ENCODE measurements at regions of chr3 and their contacts with region 1.

Region 1: DNA sequence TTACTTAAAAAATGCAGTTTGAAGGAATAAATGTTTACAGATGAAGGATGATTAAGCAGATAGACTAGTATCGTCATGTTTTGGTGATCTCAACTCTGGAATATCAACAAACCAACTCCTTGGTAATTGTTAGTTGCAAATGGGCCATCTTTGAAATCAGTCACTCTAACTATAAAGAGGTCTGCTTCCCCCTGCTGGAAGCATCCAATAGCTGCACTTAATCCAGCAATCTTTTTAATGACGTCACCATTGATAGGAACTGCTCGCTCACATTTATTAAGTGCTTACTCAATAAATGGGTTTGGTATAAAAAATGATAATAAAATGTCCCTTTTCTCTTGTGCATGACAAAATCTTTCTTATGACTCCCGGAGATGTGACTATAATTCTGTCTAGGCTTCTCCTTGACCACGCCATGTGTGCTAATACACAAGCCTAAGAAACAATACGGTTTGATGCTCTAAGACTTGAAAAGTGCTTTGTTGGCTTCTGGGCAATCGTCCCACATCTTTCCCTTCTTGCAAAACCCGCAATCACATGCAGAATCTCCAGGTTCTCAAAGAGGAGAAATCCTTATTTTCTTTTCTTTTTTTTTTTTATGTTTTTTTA is 227.6 kb upstream of the POU1F1 start:
- DNase-seq: peak; percentile 9 to 57
- H3K4me3 ChIP-seq: no peak overlapping the region
- H3K27ac ChIP-seq: no peak overlapping the region
- H3K4me1 ChIP-seq: no peaks in the 10 kb centered on the region
- H3K27me3 ChIP-seq: no peaks in the 10 kb centered on the region
- CTCF ChIP-seq: peak; percentile 82

Region 2: GRCh38 chr3:86774082-86774691 is 729.8 kb before region 1 on chr3:
- CTCF ChIA-PET with region 1: no interaction called
- POLR2A ChIA-PET with region 1: no interaction called
- intact Hi-C with region 1: loop called (anchors 10 kb)
- DNase-seq: peak in 1 of 2 experiments; percentile 44
- H3K4me3 ChIP-seq: no peak overlapping the region
- H3K27ac ChIP-seq: no peak overlapping the region
- H3K4me1 ChIP-seq: no peaks in the 10 kb centered on the region
- H3K27me3 ChIP-seq: no peaks in the 10 kb centered on the region
- CTCF ChIP-seq: peak; percentile 81

Region 3: GRCh38 chr3:87260270-87260669 is 243.7 kb before region 1 on chr3:
- CTCF ChIA-PET with region 1: interaction called, 4 read pairs
- POLR2A ChIA-PET with region 1: no interaction called
- intact Hi-C with region 1: loop called (anchors 1 kb)
- DNase-seq: peak; percentile 20 to 50
- H3K4me3 ChIP-seq: no peak overlapping the region
- H3K27ac ChIP-seq: no peak overlapping the region
- H3K4me1 ChIP-seq: no peaks in the 10 kb centered on the region
- H3K27me3 ChIP-seq: no peaks in the 10 kb centered on the region
- CTCF ChIP-seq: peak; percentile 84

Region 4: DNA sequence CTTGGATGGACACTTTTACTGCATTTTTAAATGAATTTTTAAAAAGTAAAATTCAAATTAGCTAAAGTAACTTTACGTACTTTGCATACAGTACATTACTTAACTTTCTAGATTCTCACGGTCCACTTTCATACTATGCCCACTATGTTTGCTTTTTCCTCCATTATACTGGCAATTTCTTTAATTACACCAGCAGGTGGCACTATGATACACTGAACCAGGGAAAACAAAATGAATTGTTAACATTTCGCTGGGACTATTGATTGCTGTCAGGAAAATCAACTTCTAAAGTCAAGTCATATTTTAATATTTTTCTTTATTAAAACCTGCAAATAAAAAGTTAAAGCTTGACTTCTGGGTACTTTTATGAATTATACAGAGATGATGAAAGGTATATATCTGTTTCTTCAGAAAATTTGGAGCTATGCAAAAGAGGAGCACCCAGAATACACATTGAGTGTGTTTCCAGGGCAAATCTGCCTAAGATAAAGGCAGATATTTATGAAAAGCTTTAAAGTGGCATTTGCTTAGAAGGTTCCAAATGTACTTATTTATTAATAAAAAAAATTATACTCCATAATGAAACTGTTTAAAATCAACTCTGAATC is 205.8 kb before region 1 on chr3:
- CTCF ChIA-PET with region 1: interaction called, 5 read pairs
- POLR2A ChIA-PET with region 1: no interaction called
- intact Hi-C with region 1: loop called (anchors 1 kb)
- DNase-seq: no peak
- H3K4me3 ChIP-seq: no peak overlapping the region
- H3K27ac ChIP-seq: no peak overlapping the region
- H3K4me1 ChIP-seq: no peaks in the 10 kb centered on the region
- H3K27me3 ChIP-seq: no peaks in the 10 kb centered on the region
- CTCF ChIP-seq: peak; percentile 89

Region 5: GRCh38 chr3:87350364-87351199 is 153.4 kb before region 1 on chr3:
- CTCF ChIA-PET with region 1: interaction called, 5 read pairs
- POLR2A ChIA-PET with region 1: no interaction called
- intact Hi-C with region 1: loop called (anchors 1 kb)
- DNase-seq: peak in 1 of 2 experiments; percentile 48
- H3K4me3 ChIP-seq: no peak overlapping the region
- H3K27ac ChIP-seq: no peak overlapping the region
- H3K4me1 ChIP-seq: no peaks in the 10 kb centered on the region
- H3K27me3 ChIP-seq: no peaks in the 10 kb centered on the region
- CTCF ChIP-seq: peak; percentile 88

Measured in PC-9 (cell line).